CD4-positive, alpha-beta memory T cell (primary cell): ENCODE measurements at regions of chr2 and their contacts with region 1.

Region 1: DNA sequence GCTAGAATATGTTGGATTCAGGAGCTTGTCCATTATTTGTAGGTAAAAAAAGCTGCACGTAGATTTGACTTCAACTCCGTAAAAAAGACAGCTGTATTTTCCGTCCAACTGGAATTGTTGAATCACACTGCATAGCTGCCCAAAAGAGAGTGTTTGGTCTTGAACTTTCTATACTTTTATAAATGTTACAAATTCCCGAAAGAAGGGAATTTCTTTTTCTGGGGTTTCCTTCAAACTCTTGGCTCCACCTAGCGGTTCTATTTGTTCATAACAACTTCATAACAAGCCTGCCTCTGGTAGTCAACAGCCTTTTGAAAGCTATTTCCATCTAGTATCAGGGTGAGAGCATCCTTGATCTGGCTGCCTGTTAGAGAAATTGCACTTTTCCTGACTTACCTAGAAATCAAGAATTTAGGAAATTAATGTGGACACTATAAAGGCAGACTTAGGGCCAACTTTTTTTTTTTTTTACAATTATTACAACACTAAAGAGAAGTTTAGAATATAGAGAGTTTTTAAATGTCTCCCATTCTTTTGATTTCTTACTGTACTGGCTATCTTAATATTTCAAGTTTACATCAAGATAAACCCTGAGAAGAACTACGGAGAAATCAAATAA is 48.1 kb downstream of the TMEM185B start:
- DNase-seq: peak; percentile 45 to 55 (median 50)
- H3K4me3 ChIP-seq: no peak overlapping the region
- H3K4me3 Mint-ChIP-seq: peak overlapping the region in 3 of 8 donors; percentile 4 to 69 (median 11)
- H3K27ac ChIP-seq: no peak overlapping the region
- H3K27ac Mint-ChIP-seq: peak overlapping the region in 6 of 7 donors; percentile 17 to 95 (median 58)
- H3K4me1 ChIP-seq: peaks cover 48% of the 10 kb centered on the region
- H3K4me1 Mint-ChIP-seq: peaks cover 23 to 51% (median 38%) of the 10 kb centered on the region in 4 donors
- H3K27me3 ChIP-seq: no peaks in the 10 kb centered on the region
- H3K27me3 Mint-ChIP-seq: no peaks in the 10 kb centered on the region

Region 2: GRCh38 chr2:119678998-119679710 is 495.9 kb before region 1 on chr2 and contains the start of gene TMEM177:
- CTCF ChIA-PET with region 1: interaction called, 20 read pairs
- POLR2A ChIA-PET with region 1: interaction called, 38 read pairs
- intact Hi-C with region 1: loop called (anchors 1 kb)
- DNase-seq: peak; percentile 86 to 89 (median 88)
- H3K4me3 ChIP-seq: peak within 1 kb of the TSS; percentile 55 to 84
- H3K4me3 Mint-ChIP-seq: peak within 1 kb of the TSS; percentile 75 to 96 (median 94)
- H3K27ac ChIP-seq: peak within 1 kb of the TSS; percentile 75
- H3K27ac Mint-ChIP-seq: peak within 1 kb of the TSS; percentile 92 to 98 (median 97)
- H3K4me1 ChIP-seq: peaks cover 17% of the 10 kb centered on the region
- H3K4me1 Mint-ChIP-seq: peaks cover 21 to 49% (median 35%) of the 10 kb centered on the region in 4 donors
- H3K27me3 ChIP-seq: no peaks in the 10 kb centered on the region
- H3K27me3 Mint-ChIP-seq: peaks cover 0 to 6% of the 10 kb centered on the region in 2 donors
- total RNA-seq, gene TMEM177: 22.5 to 23.9 TPM

Region 3: DNA sequence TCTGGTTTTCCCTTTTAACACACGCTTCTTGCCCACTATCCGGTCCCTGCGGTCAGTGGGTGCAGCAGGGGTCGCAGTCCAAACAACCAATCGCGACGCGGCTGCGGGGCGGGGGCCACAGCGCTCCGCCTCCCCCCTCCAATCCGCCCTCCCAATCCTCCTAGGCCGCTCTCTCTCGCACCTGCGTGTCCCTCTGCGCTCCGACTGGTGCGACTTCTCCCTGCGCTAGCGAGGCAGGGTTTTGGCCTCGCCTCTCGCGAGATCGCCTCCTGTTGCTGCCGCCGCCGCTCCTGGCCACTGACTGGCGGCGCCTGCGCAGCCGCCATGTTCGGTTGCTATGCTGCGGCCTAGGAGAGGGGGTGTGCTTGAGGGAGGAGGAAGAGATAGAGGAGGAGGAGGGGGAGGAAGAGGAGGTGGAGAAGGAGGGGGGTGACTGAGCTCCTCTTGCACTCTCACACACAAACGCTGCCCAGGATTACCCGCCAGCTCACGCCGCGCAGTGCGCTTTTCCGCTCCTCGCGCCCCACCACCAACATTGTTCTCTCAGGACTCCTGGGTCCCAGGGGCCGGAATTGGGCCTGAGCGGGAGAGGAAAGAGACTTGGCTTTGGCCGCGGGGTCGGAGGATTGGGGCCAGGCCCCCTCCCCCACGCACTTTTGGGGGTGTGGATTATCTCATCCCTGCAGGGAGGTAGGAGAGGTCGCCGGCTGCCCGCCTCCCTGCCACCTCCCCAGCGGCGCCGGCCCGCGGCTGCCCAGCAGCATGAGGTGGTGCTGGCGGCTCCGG is 415.4 kb before region 1 on chr2 and contains the start of gene PTPN4:
- CTCF ChIA-PET with region 1: interaction called, 150 read pairs
- POLR2A ChIA-PET with region 1: interaction called, 29 read pairs
- intact Hi-C with region 1: loop called (anchors 1 kb)
- DNase-seq: peak; percentile 94 to 98 (median 98)
- H3K4me3 ChIP-seq: peak within 1 kb of the TSS; percentile 82 to 88
- H3K4me3 Mint-ChIP-seq: peak within 1 kb of the TSS; percentile 93 to 97 (median 95)
- H3K27ac ChIP-seq: peak within 1 kb of the TSS; percentile 78
- H3K27ac Mint-ChIP-seq: peak within 1 kb of the TSS; percentile 88 to 94 (median 92)
- H3K4me1 ChIP-seq: peaks cover 50% of the 10 kb centered on the region
- H3K4me1 Mint-ChIP-seq: peaks cover 30 to 58% (median 37%) of the 10 kb centered on the region in 4 donors
- H3K27me3 ChIP-seq: no peaks in the 10 kb centered on the region
- H3K27me3 Mint-ChIP-seq: no peaks in the 10 kb centered on the region
- total RNA-seq, gene PTPN4: 83.1 to 88.3 TPM

Region 4: DNA sequence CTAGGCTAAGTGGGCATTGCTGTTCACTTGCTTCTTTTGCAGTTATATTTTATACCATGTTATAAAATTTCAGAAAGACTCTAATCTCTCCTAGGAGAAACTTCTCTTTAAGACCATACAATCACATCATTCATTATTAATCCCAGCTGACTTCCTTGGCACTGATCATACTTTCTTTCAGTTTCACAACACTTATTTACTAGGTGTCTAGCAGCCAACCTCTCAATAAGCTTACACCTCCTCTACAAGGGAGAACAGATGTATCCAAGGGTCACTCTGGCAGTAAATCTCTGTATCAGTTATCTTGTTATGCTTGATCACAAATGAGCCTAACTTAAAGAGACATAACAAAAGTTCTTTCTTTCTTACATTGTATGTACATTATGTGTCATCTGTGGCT is 232.0 kb before region 1 on chr2:
- CTCF ChIA-PET with region 1: interaction called, 10 read pairs
- POLR2A ChIA-PET with region 1: no interaction called
- intact Hi-C with region 1: no loop called
- DNase-seq: no peak
- H3K4me3 ChIP-seq: no peak overlapping the region
- H3K4me3 Mint-ChIP-seq: peak overlapping the region in 1 of 8 donors; percentile 48
- H3K27ac ChIP-seq: no peak overlapping the region
- H3K27ac Mint-ChIP-seq: peak overlapping the region; percentile 18 to 73 (median 50)
- H3K4me1 ChIP-seq: peaks cover 38% of the 10 kb centered on the region
- H3K4me1 Mint-ChIP-seq: peaks cover 36 to 70% (median 43%) of the 10 kb centered on the region in 4 donors
- H3K27me3 ChIP-seq: no peaks in the 10 kb centered on the region
- H3K27me3 Mint-ChIP-seq: no peaks in the 10 kb centered on the region

Region 5: DNA sequence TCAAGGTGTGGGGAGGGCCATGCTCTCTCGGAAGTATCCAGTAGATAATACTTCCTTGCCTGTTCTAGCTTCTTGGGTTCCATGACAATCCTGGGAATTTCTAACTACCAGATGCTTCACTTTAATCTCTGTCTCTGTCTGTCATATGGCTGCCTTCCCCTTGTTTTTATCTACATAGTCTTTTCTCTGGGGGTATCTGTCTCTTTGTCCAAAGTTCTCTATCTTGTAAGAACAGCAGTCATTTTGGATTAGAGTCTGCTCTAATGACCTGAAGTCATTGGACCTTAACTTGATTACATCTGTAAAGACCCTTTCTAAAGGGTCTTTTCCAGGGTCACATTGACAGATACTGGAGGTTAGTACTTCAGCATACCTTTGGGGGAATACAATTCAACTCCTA is 173.6 kb before region 1 on chr2:
- CTCF ChIA-PET with region 1: no interaction called
- POLR2A ChIA-PET with region 1: no interaction called
- intact Hi-C with region 1: no loop called
- DNase-seq: no peak
- H3K4me3 ChIP-seq: no peak overlapping the region
- H3K4me3 Mint-ChIP-seq: no peak overlapping the region
- H3K27ac ChIP-seq: no peak overlapping the region
- H3K27ac Mint-ChIP-seq: no peak overlapping the region
- H3K4me1 ChIP-seq: no peaks in the 10 kb centered on the region
- H3K4me1 Mint-ChIP-seq: peaks cover 0 to 4% (median 0%) of the 10 kb centered on the region in 4 donors
- H3K27me3 ChIP-seq: no peaks in the 10 kb centered on the region
- H3K27me3 Mint-ChIP-seq: no peaks in the 10 kb centered on the region

Region 6: DNA sequence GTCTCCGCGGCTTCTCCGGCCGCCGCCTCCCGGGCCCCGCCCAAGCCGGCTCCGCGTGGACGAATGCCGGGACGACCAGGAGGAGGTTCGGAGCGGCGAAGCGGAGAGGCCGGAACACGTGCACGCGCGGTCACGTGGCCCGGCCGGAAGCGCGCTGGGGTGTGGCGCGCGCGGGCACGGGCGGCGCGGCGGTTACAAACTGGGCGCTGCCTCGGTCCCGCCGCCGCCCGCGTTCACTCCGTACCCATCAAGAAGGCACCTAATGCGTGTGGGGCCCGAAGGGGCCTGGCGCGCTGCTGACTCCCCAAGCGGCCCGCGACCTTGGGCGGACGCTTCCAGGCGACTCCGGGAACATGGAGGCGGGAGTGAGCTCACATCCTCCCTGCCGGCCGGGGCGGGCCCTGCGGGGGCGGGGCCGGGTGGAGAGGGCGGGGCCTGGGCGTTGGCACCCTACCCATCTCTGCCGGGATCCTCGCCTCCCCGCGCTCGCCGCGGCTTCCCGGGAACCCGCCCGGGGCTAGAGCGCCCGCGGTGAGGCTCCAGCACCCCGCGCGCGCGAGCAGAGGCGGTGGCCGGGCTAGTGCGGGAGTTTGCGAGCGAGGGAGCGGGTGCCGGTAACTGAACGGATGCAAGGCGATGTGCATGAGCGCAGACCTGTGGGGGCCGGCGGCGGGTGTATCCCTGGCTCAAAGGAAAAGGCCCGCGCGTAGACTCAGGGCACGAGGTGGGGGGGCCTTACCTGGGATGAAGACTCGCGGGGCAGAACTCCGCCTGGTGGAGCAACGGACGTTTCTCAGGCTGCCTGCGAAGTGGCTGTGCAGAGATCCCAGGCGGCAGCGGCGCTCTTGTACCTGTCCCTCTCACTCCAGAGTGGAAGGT is 48.2 kb after region 1 on chr2 and contains the start of gene TMEM185B:
- CTCF ChIA-PET with region 1: interaction called, 26 read pairs
- POLR2A ChIA-PET with region 1: interaction called, 25 read pairs
- intact Hi-C with region 1: loop called (anchors 1 kb)
- DNase-seq: peak; percentile 89 to 94 (median 90)
- H3K4me3 ChIP-seq: peak within 1 kb of the TSS; percentile 73 to 75
- H3K4me3 Mint-ChIP-seq: peak within 1 kb of the TSS; percentile 86 to 91 (median 88)
- H3K27ac ChIP-seq: peak within 1 kb of the TSS; percentile 86
- H3K27ac Mint-ChIP-seq: peak within 1 kb of the TSS; percentile 90 to 97 (median 92)
- H3K4me1 ChIP-seq: peaks cover 35% of the 10 kb centered on the region
- H3K4me1 Mint-ChIP-seq: peaks cover 31 to 67% (median 47%) of the 10 kb centered on the region in 4 donors
- H3K27me3 ChIP-seq: no peaks in the 10 kb centered on the region
- H3K27me3 Mint-ChIP-seq: no peaks in the 10 kb centered on the region
- total RNA-seq, gene TMEM185B: 20.3 to 20.8 TPM

Region 7: DNA sequence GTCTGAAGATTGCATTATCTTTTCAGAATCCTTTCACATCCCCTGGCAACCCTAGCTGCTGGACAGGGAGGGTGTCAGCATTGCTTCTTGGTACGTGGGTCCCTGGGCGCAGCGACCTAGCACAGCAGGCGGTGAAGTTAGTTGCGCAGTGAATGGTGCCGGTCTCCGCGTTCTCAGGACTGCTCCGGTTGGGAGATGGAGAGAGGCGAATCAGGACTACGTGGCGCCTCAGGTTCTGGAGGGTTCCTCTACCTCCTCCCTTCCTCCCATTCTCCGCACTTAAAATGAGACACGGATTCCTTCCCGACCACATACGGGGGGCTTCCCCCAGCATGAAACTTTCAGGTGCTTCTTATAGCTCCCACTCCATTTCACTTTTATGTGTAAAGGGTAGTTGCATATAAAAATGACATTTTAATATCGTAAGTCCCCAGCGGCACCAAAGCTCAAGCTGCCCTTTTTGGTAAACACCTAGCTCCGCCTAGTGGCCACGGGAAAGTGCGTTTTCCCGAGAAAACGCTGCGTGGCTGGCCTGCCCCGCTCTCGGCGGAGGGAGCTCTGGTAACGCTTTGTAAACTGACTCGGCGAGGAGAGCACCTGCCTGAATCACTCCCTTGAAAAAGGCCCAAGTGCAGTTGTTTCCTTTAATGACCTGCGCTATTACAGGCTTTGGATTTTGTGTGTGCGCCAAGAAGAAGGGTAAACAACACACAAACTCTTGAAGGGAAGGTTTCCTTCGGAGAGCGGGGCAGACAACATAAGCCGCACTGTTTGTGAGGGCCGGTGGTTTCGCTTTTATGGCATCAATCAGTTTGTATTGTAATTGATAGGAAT is 138.0 kb after region 1 on chr2:
- CTCF ChIA-PET with region 1: interaction called, 74 read pairs
- POLR2A ChIA-PET with region 1: interaction called, 9 read pairs
- intact Hi-C with region 1: loop called (anchors 1 kb)
- DNase-seq: peak; percentile 56 to 65 (median 61)
- H3K4me3 ChIP-seq: peak overlapping the region; percentile 15 to 48
- H3K4me3 Mint-ChIP-seq: peak overlapping the region; percentile 66 to 91 (median 84)
- H3K27ac ChIP-seq: no peak overlapping the region
- H3K27ac Mint-ChIP-seq: peak overlapping the region in 6 of 7 donors; percentile 32 to 78 (median 62)
- H3K4me1 ChIP-seq: peaks cover 19% of the 10 kb centered on the region
- H3K4me1 Mint-ChIP-seq: peaks cover 11 to 29% (median 21%) of the 10 kb centered on the region in 4 donors
- H3K27me3 ChIP-seq: no peaks in the 10 kb centered on the region
- H3K27me3 Mint-ChIP-seq: peaks cover 0 to 4% of the 10 kb centered on the region in 2 donors